Lower leg skin (tissue), 4 donors: ENCODE measurements at regions of chr11 and their contacts with region 1.

Region 1: GRCh38 chr11:132595711-132596134 is 936.6 kb downstream of the OPCML start:
- DNase-seq: no peak
- H3K4me3 ChIP-seq: no peak overlapping the region
- CTCF ChIP-seq: no peak
- POLR2A ChIP-seq: no peak

Region 2: DNA sequence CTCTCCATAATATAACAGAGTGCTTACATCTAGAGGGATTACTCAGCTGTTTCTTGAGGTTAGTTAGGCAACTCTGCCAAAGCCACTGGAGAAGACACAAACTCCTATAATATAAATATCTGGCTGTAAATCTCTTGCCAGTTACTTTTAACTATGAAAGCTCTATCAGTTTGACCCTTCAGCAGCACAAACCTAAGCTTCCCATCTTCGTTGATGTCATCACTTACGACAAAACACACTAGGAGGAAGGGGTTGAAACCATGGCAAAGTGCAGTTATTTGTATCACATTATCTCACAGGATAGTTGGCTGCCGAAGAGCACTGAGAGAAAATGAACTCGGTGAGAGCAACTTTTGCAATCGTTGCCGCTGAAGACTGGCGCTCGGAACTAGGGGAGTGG is 14.5 kb after region 1 on chr11:
- intact Hi-C with region 1: loop called (anchors 1 kb)
- DNase-seq: no peak
- H3K4me3 ChIP-seq: no peak overlapping the region
- CTCF ChIP-seq: no peak
- POLR2A ChIP-seq: no peak